ENCODE measurements at regions of chr10 and their contacts with region 1.

Region 1: DNA sequence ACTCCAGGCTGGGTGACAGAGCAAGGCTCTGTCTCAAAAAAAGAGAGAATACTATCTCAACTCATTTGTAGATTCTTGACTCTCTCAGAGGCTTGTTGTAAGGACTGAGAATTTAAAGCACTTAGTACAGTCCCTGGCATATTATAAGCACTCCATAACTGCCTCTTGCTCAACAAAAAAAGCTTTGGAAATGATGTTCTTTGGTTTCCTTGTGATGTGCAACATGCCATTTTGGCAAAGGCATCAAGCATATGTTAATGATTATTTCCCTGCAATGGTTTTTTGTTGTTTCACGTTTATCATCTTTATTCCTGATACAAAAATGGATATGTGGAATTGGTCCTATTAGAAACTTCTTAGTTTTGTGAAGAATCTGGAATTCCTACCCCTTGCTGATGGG is 15.7 kb downstream of the NOLC1 start:
- DNase-seq: no peak
- ATAC-seq: no peak

Region 2: GRCh38 chr10:102040305-102041050 is 127.4 kb before region 1 on chr10:
- intact Hi-C with region 1: no loop called
- DNase-seq: no peak
- ATAC-seq: no peak

Region 3: GRCh38 chr10:102352066-102352715 is 184.3 kb after region 1 on chr10:
- intact Hi-C with region 1: loop called (anchors 5 kb)
- DNase-seq: peak; percentile 48
- ATAC-seq: peak; percentile 60

Measured in Right ventricle myocardium superior (tissue), 1 donor.